K562 (cell line): ENCODE measurements at regions of chr4 and their contacts with region 1.

Region 1: GRCh38 chr4:109977854-109978501 is 65.3 kb downstream of the EGF start:
- DNase-seq: peak in 3 of 4 experiments; percentile 17 to 29 (median 19)
- ATAC-seq: peak; percentile 67
- H3K4me3 ChIP-seq: no peak overlapping the region
- H3K27ac ChIP-seq: no peak overlapping the region
- H3K4me1 ChIP-seq: no peaks in the 10 kb centered on the region
- H3K27me3 ChIP-seq: peaks cover 0 to 4% of the 10 kb centered on the region in 2 experiments; a peak in 1 of 5 replicates
- CTCF ChIP-seq: peak; percentile 18 to 70 (median 28); a peak in 2 of 6 replicates
- EP300 ChIP-seq: no peak
- POLR2A ChIP-seq: no peak
- RAD21 ChIP-seq: peak; percentile 72 to 73

Region 2: GRCh38 chr4:109448828-109449227 is 529.1 kb before region 1 on chr4:
- CTCF ChIA-PET with region 1: no interaction called
- POLR2A ChIA-PET with region 1: no interaction called
- in situ Hi-C with region 1: no loop called
- intact Hi-C with region 1: no loop called
- DNase-seq: no peak
- ATAC-seq: no peak
- H3K4me3 ChIP-seq: no peak overlapping the region
- H3K27ac ChIP-seq: no peak overlapping the region
- H3K4me1 ChIP-seq: no peaks in the 10 kb centered on the region
- H3K27me3 ChIP-seq: no peaks in the 10 kb centered on the region
- CTCF ChIP-seq: no peak
- EP300 ChIP-seq: no peak
- POLR2A ChIP-seq: no peak
- RAD21 ChIP-seq: no peak

Region 3: DNA sequence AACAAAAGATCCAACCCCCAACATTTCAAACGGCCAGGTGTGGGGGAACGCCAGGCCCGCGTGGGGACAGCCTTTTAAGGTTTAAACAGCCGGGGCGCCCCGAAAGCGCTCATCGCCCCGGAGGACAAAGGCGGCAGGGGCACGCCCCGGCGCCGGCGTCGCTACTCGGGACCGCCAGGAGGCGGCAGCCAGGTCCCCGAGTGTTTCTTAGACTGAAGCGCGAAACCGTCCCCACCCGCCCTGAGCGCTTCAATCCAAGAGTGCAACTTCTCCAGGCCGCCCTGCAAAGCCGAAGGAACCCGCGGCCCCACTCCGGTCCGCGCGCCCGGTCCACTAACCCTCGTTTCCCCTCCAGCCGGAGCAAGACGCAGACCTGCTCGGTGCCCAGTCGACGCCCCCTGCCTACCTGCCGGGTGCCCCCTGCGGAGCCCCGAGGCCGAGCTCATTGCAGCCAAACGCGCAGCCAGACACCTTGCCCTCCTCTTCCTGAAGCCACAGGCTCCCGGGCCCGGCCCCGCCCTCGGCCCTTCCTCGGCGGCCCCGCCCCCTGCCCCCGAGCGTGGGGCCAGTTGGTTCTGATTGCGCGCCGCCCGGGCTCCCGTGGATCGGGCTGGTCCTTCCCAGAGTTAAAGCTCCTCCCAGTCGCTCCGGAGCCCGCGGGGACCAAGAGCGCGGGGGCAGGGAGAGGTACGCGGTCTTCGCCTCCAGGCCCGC is 274.9 kb before region 1 on chr4 and contains the start of gene CASP6:
- CTCF ChIA-PET with region 1: no interaction called
- POLR2A ChIA-PET with region 1: no interaction called
- in situ Hi-C with region 1: no loop called
- intact Hi-C with region 1: loop called (anchors 10 kb)
- DNase-seq: peak; percentile 83 to 88 (median 85)
- ATAC-seq: peak; percentile 90
- H3K4me3 ChIP-seq: peak within 1 kb of the TSS; percentile 80
- H3K27ac ChIP-seq: peak within 1 kb of the TSS; percentile 82
- H3K4me1 ChIP-seq: peaks cover 22 to 24% of the 10 kb centered on the region in 2 experiments
- H3K27me3 ChIP-seq: no peaks in the 10 kb centered on the region
- CTCF ChIP-seq: peak; percentile 76 to 86 (median 77)
- EP300 ChIP-seq: no peak
- POLR2A ChIP-seq: peak; percentile 81
- RAD21 ChIP-seq: peak; percentile 68 to 72
- polyA plus RNA-seq, gene CASP6: 23.0 to 31.7 TPM

Region 4: GRCh38 chr4:109730619-109731545 is 247.1 kb before region 1 on chr4:
- CTCF ChIA-PET with region 1: no interaction called
- POLR2A ChIA-PET with region 1: no interaction called
- in situ Hi-C with region 1: no loop called
- intact Hi-C with region 1: no loop called
- DNase-seq: peak in 2 of 4 experiments; percentile 15 to 50
- ATAC-seq: peak; percentile 17; the same call in 2 of the 3 replicates
- H3K4me3 ChIP-seq: peak overlapping the region; percentile 81
- H3K27ac ChIP-seq: peak overlapping the region; percentile 89
- H3K4me1 ChIP-seq: peaks cover 16 to 37% of the 10 kb centered on the region in 2 experiments
- H3K27me3 ChIP-seq: no peaks in the 10 kb centered on the region
- CTCF ChIP-seq: no peak
- EP300 ChIP-seq: peak; percentile 48
- POLR2A ChIP-seq: no peak
- RAD21 ChIP-seq: no peak

Region 5: GRCh38 chr4:109826719-109827118 is 151.3 kb before region 1 on chr4:
- CTCF ChIA-PET with region 1: no interaction called
- POLR2A ChIA-PET with region 1: no interaction called
- in situ Hi-C with region 1: no loop called
- intact Hi-C with region 1: loop called (anchors 5 kb)
- DNase-seq: peak; percentile 19 to 25 (median 21)
- ATAC-seq: peak; percentile 82
- H3K4me3 ChIP-seq: no peak overlapping the region
- H3K27ac ChIP-seq: no peak overlapping the region
- H3K4me1 ChIP-seq: no peaks in the 10 kb centered on the region
- H3K27me3 ChIP-seq: no peaks in the 10 kb centered on the region
- CTCF ChIP-seq: peak; percentile 24 to 72 (median 26); a peak in 3 of 6 replicates
- EP300 ChIP-seq: no peak
- POLR2A ChIP-seq: no peak
- RAD21 ChIP-seq: peak; percentile 75 to 76

Region 6: DNA sequence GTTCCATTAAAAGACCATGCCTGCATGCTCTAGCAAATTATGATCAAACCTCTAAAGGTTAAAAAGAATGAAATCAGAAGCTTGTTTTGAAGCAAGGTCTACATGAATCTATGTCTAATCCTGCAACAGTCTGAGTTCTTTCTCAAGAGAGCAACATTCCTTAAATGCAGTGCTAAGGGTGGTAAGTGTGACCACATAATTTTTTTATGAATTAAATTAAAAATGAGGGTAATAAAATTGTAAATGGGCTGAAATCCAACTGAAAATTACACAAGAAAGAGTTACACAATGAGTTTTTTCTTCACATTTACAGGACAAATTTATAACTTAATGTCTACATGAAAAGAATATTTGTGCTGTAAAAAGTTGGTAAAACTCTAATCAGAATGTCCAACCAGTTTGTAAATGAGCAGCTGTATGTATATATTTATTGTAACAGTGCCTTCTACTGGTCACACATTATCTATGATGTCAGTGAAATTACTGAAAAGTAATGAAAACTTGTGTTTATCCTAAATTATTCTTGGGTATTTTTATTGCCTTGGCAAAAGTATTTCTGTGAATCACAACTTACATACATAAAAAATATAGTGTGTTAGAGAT is 981.2 kb after region 1 on chr4:
- CTCF ChIA-PET with region 1: no interaction called
- POLR2A ChIA-PET with region 1: no interaction called
- in situ Hi-C with region 1: no loop called
- intact Hi-C with region 1: no loop called
- DNase-seq: no peak
- ATAC-seq: no peak
- H3K4me3 ChIP-seq: no peak overlapping the region
- H3K27ac ChIP-seq: no peak overlapping the region
- H3K4me1 ChIP-seq: no peaks in the 10 kb centered on the region
- H3K27me3 ChIP-seq: no peaks in the 10 kb centered on the region
- CTCF ChIP-seq: no peak; a peak in 1 of 6 replicates
- EP300 ChIP-seq: no peak
- POLR2A ChIP-seq: no peak
- RAD21 ChIP-seq: no peak